CD4-positive, alpha-beta T cell (primary cell): ENCODE measurements at regions of chr3 and their contacts with region 1.

Region 1: DNA sequence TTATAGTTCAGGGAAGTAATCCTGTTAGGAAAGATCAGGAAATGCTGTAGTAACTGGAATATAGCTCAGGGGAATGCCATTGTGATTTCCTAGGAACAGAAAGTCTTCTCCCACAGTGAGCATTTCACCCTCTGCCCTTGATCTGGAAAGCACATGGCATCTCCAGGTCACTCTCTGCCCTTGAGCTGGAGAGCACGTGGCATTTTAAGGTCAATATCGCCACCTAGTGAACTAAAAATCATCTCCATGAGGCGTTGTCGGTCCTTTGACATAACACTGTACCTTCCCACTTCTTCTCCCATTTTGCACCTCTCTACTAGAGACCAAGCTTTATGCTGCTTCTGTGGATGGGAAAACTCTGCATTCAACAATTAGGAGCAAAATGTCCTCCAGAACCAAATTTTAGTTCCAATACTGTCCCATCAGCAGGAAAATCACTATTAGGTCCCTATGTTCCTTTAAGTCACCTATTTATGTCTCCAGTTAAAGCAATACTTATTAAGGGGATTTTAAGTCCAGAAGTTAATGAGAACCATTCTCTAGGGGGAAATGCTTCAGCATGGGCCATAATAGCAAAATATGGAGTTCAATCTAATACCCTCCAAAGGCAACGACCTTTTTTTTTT is 54.7 kb upstream of the GK5 start:
- DNase-seq: peak in 12 of 14 experiments; percentile 1 to 80 (median 18)
- ATAC-seq: peak; percentile 80
- H3K4me3 ChIP-seq: no peak overlapping the region
- H3K4me3 Mint-ChIP-seq: no peak overlapping the region
- H3K27ac ChIP-seq: no peak overlapping the region
- H3K27ac Mint-ChIP-seq: no peak overlapping the region
- H3K4me1 ChIP-seq: peaks cover 12% of the 10 kb centered on the region
- H3K4me1 Mint-ChIP-seq: no peaks in the 10 kb centered on the region
- H3K27me3 ChIP-seq: no peaks in the 10 kb centered on the region
- H3K27me3 Mint-ChIP-seq: no peaks in the 10 kb centered on the region
- CTCF ChIP-seq: peak; percentile 77

Region 2: DNA sequence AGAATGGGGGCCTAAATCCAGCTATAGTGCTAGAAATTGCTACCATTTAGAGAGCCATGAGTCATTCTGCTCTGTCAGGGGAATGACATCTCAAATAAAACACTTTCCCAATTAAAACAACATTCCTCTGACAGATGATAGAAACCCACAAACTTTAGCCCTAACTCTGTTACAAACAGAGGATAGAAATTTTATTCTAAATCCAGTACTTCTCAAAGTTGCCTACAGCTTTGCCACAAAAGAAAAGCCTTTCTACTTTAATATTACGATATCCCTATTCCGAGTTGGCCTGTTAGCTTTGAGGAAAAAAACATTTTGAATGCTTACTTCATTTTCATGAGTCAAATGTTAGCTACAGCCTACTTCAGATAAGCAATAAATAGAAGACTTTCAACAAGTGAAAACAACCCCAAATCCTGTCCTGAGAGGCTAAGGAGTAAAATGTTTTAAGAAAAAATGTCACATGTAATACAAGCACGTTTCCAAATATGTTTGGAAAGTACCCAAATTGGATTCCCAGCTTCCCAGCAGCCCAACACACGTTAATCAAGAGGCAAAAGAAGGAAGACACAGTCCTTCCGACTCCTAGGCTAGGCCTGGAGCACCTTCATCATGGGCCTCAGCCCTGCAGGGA is 320.0 kb before region 1 on chr3:
- CTCF ChIA-PET with region 1: interaction called, 3 read pairs
- POLR2A ChIA-PET with region 1: no interaction called
- intact Hi-C with region 1: loop called in 1 of 2 experiments (anchors 5 kb)
- DNase-seq: no peak
- ATAC-seq: no peak
- H3K4me3 ChIP-seq: no peak overlapping the region
- H3K4me3 Mint-ChIP-seq: no peak overlapping the region
- H3K27ac ChIP-seq: no peak overlapping the region
- H3K27ac Mint-ChIP-seq: no peak overlapping the region
- H3K4me1 ChIP-seq: no peaks in the 10 kb centered on the region
- H3K4me1 Mint-ChIP-seq: no peaks in the 10 kb centered on the region
- H3K27me3 ChIP-seq: no peaks in the 10 kb centered on the region
- H3K27me3 Mint-ChIP-seq: no peaks in the 10 kb centered on the region
- CTCF ChIP-seq: no peak

Region 3: GRCh38 chr3:142129516-142130171 is 150.4 kb before region 1 on chr3:
- CTCF ChIA-PET with region 1: interaction called, 4 read pairs
- POLR2A ChIA-PET with region 1: interaction called, 3 read pairs
- intact Hi-C with region 1: loop called (anchors 1 kb)
- DNase-seq: no peak
- ATAC-seq: no peak
- H3K4me3 ChIP-seq: no peak overlapping the region
- H3K4me3 Mint-ChIP-seq: no peak overlapping the region
- H3K27ac ChIP-seq: no peak overlapping the region
- H3K27ac Mint-ChIP-seq: no peak overlapping the region
- H3K4me1 ChIP-seq: no peaks in the 10 kb centered on the region
- H3K4me1 Mint-ChIP-seq: peaks cover 4% of the 10 kb centered on the region
- H3K27me3 ChIP-seq: no peaks in the 10 kb centered on the region
- H3K27me3 Mint-ChIP-seq: no peaks in the 10 kb centered on the region
- CTCF ChIP-seq: no peak